Vagina (tissue), 2 donors: ENCODE measurements at regions of chr6 and their contacts with region 1.

Region 1: GRCh38 chr6:134145786-134146185 is 93.4 kb upstream of the SLC2A12 start:
- DNase-seq: no peak
- H3K4me3 ChIP-seq: no peak overlapping the region
- H3K27ac ChIP-seq: peak overlapping the region; percentile 68
- H3K4me1 ChIP-seq: peaks cover 10% of the 10 kb centered on the region
- H3K27me3 ChIP-seq: no peaks in the 10 kb centered on the region
- CTCF ChIP-seq: no peak
- POLR2A ChIP-seq: no peak

Region 2: DNA sequence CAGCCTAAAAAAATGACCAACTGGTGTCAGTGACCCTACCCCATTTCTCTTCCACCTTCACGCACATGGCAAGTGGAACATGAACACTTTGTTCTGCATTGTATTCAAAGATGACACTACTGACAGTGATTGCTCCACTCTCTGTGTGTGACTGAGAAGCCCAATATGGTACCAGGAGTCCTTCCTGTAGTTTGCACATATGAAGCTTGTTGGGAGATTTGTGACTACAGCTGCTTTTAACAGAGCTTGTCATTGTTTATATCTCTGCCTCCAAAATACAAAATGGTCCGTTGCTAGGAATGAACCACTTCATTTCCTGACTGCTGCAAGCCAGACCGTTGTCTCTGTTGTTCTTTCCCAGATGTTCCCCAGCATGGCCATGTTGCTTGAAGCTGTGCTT is 397.2 kb before region 1 on chr6:
- intact Hi-C with region 1: no loop called
- DNase-seq: no peak
- H3K4me3 ChIP-seq: no peak overlapping the region
- H3K27ac ChIP-seq: no peak overlapping the region
- H3K4me1 ChIP-seq: no peaks in the 10 kb centered on the region
- H3K27me3 ChIP-seq: no peaks in the 10 kb centered on the region
- CTCF ChIP-seq: no peak
- POLR2A ChIP-seq: no peak

Region 3: DNA sequence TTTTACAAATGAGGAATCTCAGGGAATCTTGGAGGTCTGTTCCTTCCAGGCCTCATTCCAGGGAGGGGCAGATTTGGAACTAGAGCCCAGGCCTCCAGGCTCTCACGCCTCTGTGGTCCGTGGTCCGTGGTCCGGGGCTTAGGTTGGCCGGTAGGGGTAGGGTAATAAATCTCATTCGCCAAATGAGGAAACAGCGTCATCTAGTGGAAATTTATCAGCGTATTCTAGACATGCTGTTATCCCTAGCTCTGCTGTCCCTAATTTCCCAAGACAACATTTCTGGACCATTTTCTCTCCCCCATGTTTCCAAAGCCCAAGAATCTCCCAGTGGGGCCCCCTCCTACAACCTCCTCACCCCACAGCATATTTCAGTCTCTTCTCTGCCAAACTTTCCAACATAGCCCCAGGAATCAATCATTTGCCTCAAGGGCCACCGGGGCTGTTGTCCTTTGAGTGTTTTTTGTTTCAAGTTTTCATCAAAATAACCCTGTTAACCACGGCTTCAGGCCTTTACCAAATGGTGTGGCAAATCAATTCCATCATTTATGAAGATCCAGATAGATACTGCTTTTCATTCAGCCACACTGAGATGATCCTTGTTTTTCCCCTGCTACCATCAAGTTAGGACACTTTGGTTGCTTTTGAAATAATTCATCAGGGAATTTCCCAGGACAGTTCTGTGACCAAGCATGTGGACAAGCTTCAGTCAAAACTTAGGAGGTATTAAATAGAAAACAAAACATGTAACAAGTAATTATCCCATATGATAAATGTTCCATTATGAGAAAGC is 677.3 kb after region 1 on chr6:
- intact Hi-C with region 1: loop called (anchors 10 kb)
- DNase-seq: no peak
- H3K4me3 ChIP-seq: no peak overlapping the region
- H3K27ac ChIP-seq: peak overlapping the region; percentile 30
- H3K4me1 ChIP-seq: peaks cover 31% of the 10 kb centered on the region
- H3K27me3 ChIP-seq: no peaks in the 10 kb centered on the region
- CTCF ChIP-seq: peak; percentile 79 to 93 (median 81)
- POLR2A ChIP-seq: no peak